CD14-positive monocyte (primary cell): ENCODE measurements at regions of chr3 and their contacts with region 1.

Region 1: DNA sequence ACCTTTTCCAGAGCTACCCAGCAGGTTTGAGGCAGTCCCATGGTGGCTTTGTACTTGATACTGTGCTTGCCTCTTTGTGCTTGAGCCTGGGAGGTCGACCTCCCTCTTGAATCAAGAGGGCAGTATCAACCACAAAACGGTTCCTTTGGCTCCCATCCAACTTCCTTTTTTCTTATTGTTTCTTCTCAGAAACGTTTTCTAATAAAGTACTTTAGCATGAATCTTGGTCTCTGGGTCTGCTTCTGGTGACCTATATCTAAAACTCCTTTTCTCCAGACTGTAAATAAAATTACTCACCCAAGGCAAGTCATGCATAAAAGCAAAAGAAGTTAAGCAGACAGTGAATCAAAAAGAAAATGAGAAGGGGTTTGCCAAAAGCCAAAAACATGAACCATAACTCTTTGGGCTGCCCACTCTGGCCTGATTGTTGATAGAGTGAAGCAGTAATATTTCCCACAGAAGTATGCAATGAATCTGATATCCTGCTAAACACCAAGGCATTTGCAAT is 112.2 kb upstream of the SLC4A7 start:
- DNase-seq: peak in 2 of 3 donors; percentile 71 to 94
- H3K4me3 ChIP-seq: no peak overlapping the region
- H3K4me3 Mint-ChIP-seq: peak overlapping the region in 1 of 2 donors; percentile 53
- H3K27ac ChIP-seq: no peak overlapping the region
- H3K27ac Mint-ChIP-seq: peak overlapping the region in 3 of 7 donors; percentile 51 to 68 (median 66)
- H3K4me1 ChIP-seq: peaks cover 21 to 27% of the 10 kb centered on the region in 2 donors
- H3K4me1 Mint-ChIP-seq: peaks cover 15% of the 10 kb centered on the region
- H3K27me3 ChIP-seq: no peaks in the 10 kb centered on the region
- H3K27me3 Mint-ChIP-seq: peaks cover 0 to 2% (median 0%) of the 10 kb centered on the region in 3 donors
- CTCF ChIP-seq: no peak

Region 2: GRCh38 chr3:27533718-27534573 is 62.4 kb before region 1 on chr3:
- intact Hi-C with region 1: loop called in 1 of 2 experiments (anchors 10 kb)
- DNase-seq: peak; percentile 83 to 93 (median 88)
- H3K4me3 ChIP-seq: no peak overlapping the region
- H3K4me3 Mint-ChIP-seq: peak overlapping the region; percentile 49 to 81
- H3K27ac ChIP-seq: peak overlapping the region; percentile 80 to 90
- H3K27ac Mint-ChIP-seq: peak overlapping the region; percentile 94 to 98 (median 96)
- H3K4me1 ChIP-seq: peaks cover 27 to 33% of the 10 kb centered on the region in 2 donors
- H3K4me1 Mint-ChIP-seq: peaks cover 28% of the 10 kb centered on the region
- H3K27me3 ChIP-seq: no peaks in the 10 kb centered on the region
- H3K27me3 Mint-ChIP-seq: peaks cover 0 to 4% (median 2%) of the 10 kb centered on the region in 3 donors
- CTCF ChIP-seq: no peak

Region 3: GRCh38 chr3:27779176-27779575 is 182.8 kb after region 1 on chr3:
- intact Hi-C with region 1: no loop called
- DNase-seq: no peak
- H3K4me3 ChIP-seq: no peak overlapping the region
- H3K4me3 Mint-ChIP-seq: no peak overlapping the region
- H3K27ac ChIP-seq: no peak overlapping the region
- H3K27ac Mint-ChIP-seq: no peak overlapping the region
- H3K4me1 ChIP-seq: no peaks in the 10 kb centered on the region
- H3K4me1 Mint-ChIP-seq: no peaks in the 10 kb centered on the region
- H3K27me3 ChIP-seq: no peaks in the 10 kb centered on the region
- H3K27me3 Mint-ChIP-seq: peaks cover 1 to 7% (median 2%) of the 10 kb centered on the region in 3 donors
- CTCF ChIP-seq: no peak